ENCODE measurements at regions of chr15 and their contacts with region 1.

Region 1: GRCh38 chr15:98647774-98648653 is at the start of gene IGF1R:
- DNase-seq: peak; percentile 88
- ATAC-seq: peak; percentile 79
- H3K4me3 ChIP-seq: peak within 1 kb of the TSS; percentile 85
- H3K27ac ChIP-seq: peak within 1 kb of the TSS; percentile 78
- H3K4me1 ChIP-seq: 0 out of 2 replicates have a peak, but pooled peaks cover 2% of the 10 kb centered on the region
- H3K27me3 ChIP-seq: peaks cover 19% of the 10 kb centered on the region
- CTCF ChIP-seq: no peak
- POLR2A ChIP-seq: no peak
- RAD21 ChIP-seq: no peak
- total RNA-seq, gene IGF1R: 24.9 and 26.7 TPM in 2 replicates

Region 2: GRCh38 chr15:98442379-98442833 is 205.6 kb before region 1 on chr15:
- CTCF ChIA-PET with region 1: no interaction called
- POLR2A ChIA-PET with region 1: no interaction called
- dilution Hi-C with region 1: no loop called
- in situ Hi-C with region 1: no loop called
- intact Hi-C with region 1: loop called (anchors 1 kb)
- DNase-seq: peak; percentile 82
- ATAC-seq: peak; percentile 98
- H3K4me3 ChIP-seq: no peak overlapping the region
- H3K27ac ChIP-seq: no peak overlapping the region
- H3K4me1 ChIP-seq: no peaks in the 10 kb centered on the region
- H3K27me3 ChIP-seq: peaks cover 17% of the 10 kb centered on the region
- CTCF ChIP-seq: peak; percentile 79
- POLR2A ChIP-seq: no peak
- RAD21 ChIP-seq: peak; percentile 84

Region 3: DNA sequence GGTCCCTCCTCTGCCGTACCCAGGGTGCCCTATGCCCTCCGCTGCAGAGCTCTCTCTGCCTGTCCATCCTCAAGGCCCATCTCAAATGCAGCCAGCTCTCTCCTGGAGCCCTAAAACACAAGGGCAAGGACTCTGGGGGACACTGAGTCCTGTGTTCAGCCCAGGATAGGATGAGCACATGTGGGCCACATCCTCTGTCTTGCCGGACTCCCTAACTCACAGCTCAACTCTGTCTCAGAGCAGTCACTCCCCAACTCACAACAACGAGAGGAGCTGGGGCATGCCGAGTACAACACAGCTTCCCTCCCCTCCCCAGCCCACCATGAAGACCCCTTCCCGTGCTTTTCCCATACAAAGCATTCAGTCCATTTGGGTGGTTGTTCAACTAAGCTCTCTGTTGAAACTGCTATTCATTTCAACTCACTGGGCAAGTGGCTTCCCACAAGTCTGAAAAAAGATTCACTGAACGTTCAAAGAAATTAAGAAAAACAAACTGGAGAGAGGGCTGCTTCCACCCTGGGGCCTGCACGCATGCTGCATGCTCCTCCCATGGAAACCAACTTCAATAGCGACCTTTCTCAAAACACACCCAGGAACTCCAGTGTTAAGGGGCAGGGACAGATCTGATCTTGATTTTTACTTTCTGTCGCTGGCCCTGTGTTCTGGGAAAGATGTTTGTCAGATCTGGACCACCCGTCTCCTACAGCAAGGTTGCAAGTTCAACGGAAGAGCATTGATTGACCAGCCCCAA is 123.9 kb before region 1 on chr15:
- CTCF ChIA-PET with region 1: interaction called, 31 read pairs
- POLR2A ChIA-PET with region 1: no interaction called
- dilution Hi-C with region 1: no loop called
- in situ Hi-C with region 1: loop called (anchors 5 kb)
- intact Hi-C with region 1: loop called (anchors 1 kb)
- DNase-seq: no peak
- ATAC-seq: no peak
- H3K4me3 ChIP-seq: no peak overlapping the region
- H3K27ac ChIP-seq: no peak overlapping the region
- H3K4me1 ChIP-seq: peaks cover 2% of the 10 kb centered on the region; the same call in 1 of the 2 replicates
- H3K27me3 ChIP-seq: peaks cover under 1% of the 10 kb centered on the region; the same call in 1 of the 2 replicates
- CTCF ChIP-seq: no peak
- POLR2A ChIP-seq: no peak
- RAD21 ChIP-seq: no peak

Region 4: DNA sequence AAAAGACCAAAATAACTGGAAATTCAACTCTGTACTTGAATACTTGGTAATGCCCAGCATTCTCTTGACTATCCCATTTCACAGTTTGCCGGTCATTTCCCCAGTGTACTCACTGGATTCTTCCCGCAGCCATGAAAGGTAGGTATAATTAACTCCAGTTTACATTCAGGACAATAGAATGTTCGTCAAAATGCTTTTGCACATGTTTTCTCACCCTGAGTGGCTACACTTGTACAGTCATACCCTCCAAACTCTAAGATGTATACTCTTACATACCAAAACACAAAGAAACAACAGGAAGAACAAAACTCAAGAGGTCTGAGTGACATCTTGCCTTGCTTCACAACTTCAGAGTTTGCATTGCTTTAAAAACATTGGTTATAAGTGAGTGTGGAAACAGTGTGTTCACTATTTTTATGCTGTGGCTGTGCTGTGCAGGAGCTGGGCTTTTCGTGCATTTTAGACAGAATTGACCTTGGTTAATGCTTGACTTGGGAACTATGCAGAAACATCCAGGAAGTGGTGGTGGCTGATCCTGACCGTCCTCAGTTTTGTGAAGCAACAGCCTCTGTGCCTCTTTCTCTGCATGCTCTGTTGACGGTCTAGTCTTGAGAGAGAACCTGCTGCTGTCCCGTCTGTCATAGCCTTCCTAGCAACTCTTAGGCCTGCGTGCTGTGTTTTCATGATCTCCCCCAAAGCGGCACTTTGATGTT is 90.8 kb after region 1 on chr15:
- CTCF ChIA-PET with region 1: no interaction called
- POLR2A ChIA-PET with region 1: no interaction called
- dilution Hi-C with region 1: no loop called
- in situ Hi-C with region 1: no loop called
- intact Hi-C with region 1: no loop called
- DNase-seq: no peak
- ATAC-seq: no peak
- H3K4me3 ChIP-seq: no peak overlapping the region
- H3K27ac ChIP-seq: no peak overlapping the region
- H3K4me1 ChIP-seq: peaks cover 18% of the 10 kb centered on the region
- H3K27me3 ChIP-seq: no peaks in the 10 kb centered on the region
- CTCF ChIP-seq: no peak
- POLR2A ChIP-seq: no peak
- RAD21 ChIP-seq: no peak

Region 5: GRCh38 chr15:98779463-98780071 is 131.6 kb after region 1 on chr15:
- CTCF ChIA-PET with region 1: no interaction called
- POLR2A ChIA-PET with region 1: no interaction called
- dilution Hi-C with region 1: no loop called
- in situ Hi-C with region 1: no loop called
- intact Hi-C with region 1: loop called (anchors 2 kb)
- DNase-seq: peak; percentile 65
- ATAC-seq: peak; percentile 91
- H3K4me3 ChIP-seq: no peak overlapping the region
- H3K27ac ChIP-seq: no peak overlapping the region
- H3K4me1 ChIP-seq: peaks cover 14% of the 10 kb centered on the region
- H3K27me3 ChIP-seq: no peaks in the 10 kb centered on the region
- CTCF ChIP-seq: peak; percentile 84
- POLR2A ChIP-seq: no peak
- RAD21 ChIP-seq: peak; percentile 87

Region 6: GRCh38 chr15:98904544-98904943 is 256.5 kb after region 1 on chr15:
- CTCF ChIA-PET with region 1: no interaction called
- POLR2A ChIA-PET with region 1: no interaction called
- dilution Hi-C with region 1: no loop called
- in situ Hi-C with region 1: no loop called
- intact Hi-C with region 1: loop called (anchors 1 kb)
- DNase-seq: peak; percentile 75
- ATAC-seq: peak; percentile 66
- H3K4me3 ChIP-seq: no peak overlapping the region
- H3K27ac ChIP-seq: peak overlapping the region; percentile 60; the same call in 1 of the 2 replicates
- H3K4me1 ChIP-seq: peaks cover 51% of the 10 kb centered on the region
- H3K27me3 ChIP-seq: no peaks in the 10 kb centered on the region
- CTCF ChIP-seq: peak; percentile 82
- POLR2A ChIP-seq: 0 out of 2 replicates have a peak, but pooled peaks have one; percentile 30
- RAD21 ChIP-seq: peak; percentile 85

Region 7: GRCh38 chr15:99076552-99077308 is 428.7 kb after region 1 on chr15:
- CTCF ChIA-PET with region 1: interaction called, 3 read pairs
- POLR2A ChIA-PET with region 1: no interaction called
- dilution Hi-C with region 1: no loop called
- in situ Hi-C with region 1: loop called (anchors 10 kb)
- intact Hi-C with region 1: loop called (anchors 2 kb)
- DNase-seq: peak; percentile 86
- ATAC-seq: peak; percentile 94
- H3K4me3 ChIP-seq: peak overlapping the region; percentile 19; the same call in 1 of the 2 replicates
- H3K27ac ChIP-seq: peak overlapping the region; percentile 14
- H3K4me1 ChIP-seq: no peaks in the 10 kb centered on the region
- H3K27me3 ChIP-seq: no peaks in the 10 kb centered on the region
- CTCF ChIP-seq: peak; percentile 91
- POLR2A ChIP-seq: no peak
- RAD21 ChIP-seq: peak; percentile 96